Activated T-helper 2 cell treated with anti-CD3 and anti-CD28 coated beads, Interferon-gamma antibody, Interleukin-2, Interleukin-4, amounts not matched to agents 10 μg/mL and 5 μg/mL and 100 μg/mL, durations not matched to agents 14 hours and 24 hours and 36 hours (primary cell): ENCODE measurements at regions of chr5 and their contacts with region 1.

Region 1: GRCh38 chr5:101045689-101046088 is 142.6 kb upstream of the ST8SIA4 start:
- DNase-seq: no peak
- H3K4me3 Mint-ChIP-seq: no peak overlapping the region
- H3K27ac Mint-ChIP-seq: no peak overlapping the region
- H3K4me1 Mint-ChIP-seq: peaks cover 6% of the 10 kb centered on the region
- H3K27me3 Mint-ChIP-seq: peaks cover 5% of the 10 kb centered on the region

Region 2: DNA sequence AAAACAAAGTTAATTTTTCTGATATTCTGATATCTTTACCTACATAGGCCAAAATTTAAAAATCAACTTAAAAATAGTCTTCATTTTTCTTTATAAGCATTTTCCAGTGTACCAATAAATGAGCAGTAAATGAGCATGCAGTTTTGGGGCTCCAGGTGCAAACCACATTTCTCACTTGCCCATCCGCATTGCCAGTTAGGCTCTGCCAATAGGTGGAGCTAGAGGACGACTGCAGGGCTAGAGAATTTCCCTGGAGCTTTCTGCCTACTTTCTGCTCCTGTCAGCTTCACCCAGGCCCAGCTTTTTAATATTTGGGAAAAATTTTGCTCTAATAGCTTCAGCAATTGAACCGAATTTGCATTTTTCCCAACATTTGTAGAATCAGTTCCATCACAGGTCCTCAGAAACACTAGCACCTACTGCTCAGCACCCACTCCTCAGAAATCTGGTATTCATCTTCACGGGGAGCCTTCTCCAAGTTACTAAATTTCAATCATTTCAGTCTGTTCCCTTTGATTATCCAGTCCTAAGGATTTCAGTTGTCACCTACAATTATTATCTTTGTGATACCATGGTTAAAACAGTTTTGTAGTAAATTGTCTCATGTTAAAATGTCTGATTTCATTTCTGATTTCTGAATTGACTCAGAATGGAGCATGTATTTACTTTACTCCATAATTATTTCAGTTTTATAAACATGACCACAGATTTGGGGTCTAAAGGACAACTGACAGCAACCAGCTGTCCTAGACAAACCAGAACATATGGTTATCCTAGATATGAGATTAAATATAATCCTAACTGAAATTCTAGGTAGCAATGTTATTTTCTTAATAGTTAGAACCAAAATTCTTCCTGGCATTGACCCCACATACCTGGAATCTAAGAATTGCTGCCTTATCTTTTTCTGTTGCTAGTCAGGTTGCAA is 615.2 kb before region 1 on chr5:
- intact Hi-C with region 1: loop called (anchors 10 kb)
- DNase-seq: peak; percentile 14
- H3K4me3 Mint-ChIP-seq: no peak overlapping the region
- H3K27ac Mint-ChIP-seq: no peak overlapping the region
- H3K4me1 Mint-ChIP-seq: no peaks in the 10 kb centered on the region
- H3K27me3 Mint-ChIP-seq: peaks cover 7% of the 10 kb centered on the region

Region 3: DNA sequence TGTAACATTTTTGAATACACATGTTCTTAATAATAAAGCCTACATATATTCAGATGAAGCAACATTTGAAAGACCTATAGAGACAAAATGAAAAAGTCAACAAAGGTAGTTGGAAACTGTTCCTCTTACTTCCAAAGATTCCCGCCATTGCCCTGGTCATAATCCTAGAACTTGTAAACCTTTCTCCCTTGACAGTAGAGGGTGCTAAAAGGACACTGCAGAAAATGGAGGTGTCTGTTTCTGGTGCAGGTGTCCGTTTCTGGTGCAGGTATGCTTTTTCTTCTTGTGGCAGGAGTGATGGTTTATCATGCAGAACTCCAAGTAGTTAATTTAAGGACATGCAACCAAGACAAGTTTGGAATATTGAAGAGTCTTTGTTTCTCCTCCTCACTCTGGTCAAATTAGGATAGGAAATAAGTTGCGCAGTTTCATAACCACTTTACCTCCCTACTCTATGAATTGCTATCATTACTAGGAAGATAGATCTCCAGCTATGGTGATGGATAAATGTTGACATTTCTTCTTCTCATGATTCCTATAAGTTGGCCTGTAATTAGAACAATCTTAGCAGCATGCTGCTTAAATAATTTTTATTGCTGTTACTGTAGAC is 566.5 kb before region 1 on chr5:
- intact Hi-C with region 1: loop called (anchors 5 kb)
- DNase-seq: no peak
- H3K4me3 Mint-ChIP-seq: no peak overlapping the region
- H3K27ac Mint-ChIP-seq: no peak overlapping the region
- H3K4me1 Mint-ChIP-seq: no peaks in the 10 kb centered on the region
- H3K27me3 Mint-ChIP-seq: peaks cover 12% of the 10 kb centered on the region

Region 4: DNA sequence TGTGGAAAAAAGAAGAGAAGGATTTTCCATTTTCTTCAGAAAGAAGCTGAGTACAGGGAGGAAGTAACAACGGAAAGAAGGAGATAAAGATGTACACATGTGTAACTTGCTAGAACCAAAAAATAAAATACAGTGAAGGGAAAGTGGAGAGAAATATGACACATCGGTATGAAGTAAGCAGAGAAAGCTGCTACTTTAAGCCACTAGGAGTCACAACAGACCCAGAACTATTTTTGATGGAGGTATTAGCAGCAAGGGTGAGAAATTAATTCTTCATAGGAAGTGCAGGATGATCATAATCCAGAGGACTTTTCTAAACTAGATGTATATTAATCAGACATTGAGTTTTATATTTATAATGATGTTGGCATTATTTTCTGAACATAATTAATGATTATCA is 422.0 kb before region 1 on chr5:
- intact Hi-C with region 1: loop called (anchors 1 kb)
- DNase-seq: no peak
- H3K4me3 Mint-ChIP-seq: no peak overlapping the region
- H3K27ac Mint-ChIP-seq: no peak overlapping the region
- H3K4me1 Mint-ChIP-seq: peaks cover 4% of the 10 kb centered on the region
- H3K27me3 Mint-ChIP-seq: peaks cover 20% of the 10 kb centered on the region